ENCODE measurements at regions of chr17 and their contacts with region 1.

Region 1: DNA sequence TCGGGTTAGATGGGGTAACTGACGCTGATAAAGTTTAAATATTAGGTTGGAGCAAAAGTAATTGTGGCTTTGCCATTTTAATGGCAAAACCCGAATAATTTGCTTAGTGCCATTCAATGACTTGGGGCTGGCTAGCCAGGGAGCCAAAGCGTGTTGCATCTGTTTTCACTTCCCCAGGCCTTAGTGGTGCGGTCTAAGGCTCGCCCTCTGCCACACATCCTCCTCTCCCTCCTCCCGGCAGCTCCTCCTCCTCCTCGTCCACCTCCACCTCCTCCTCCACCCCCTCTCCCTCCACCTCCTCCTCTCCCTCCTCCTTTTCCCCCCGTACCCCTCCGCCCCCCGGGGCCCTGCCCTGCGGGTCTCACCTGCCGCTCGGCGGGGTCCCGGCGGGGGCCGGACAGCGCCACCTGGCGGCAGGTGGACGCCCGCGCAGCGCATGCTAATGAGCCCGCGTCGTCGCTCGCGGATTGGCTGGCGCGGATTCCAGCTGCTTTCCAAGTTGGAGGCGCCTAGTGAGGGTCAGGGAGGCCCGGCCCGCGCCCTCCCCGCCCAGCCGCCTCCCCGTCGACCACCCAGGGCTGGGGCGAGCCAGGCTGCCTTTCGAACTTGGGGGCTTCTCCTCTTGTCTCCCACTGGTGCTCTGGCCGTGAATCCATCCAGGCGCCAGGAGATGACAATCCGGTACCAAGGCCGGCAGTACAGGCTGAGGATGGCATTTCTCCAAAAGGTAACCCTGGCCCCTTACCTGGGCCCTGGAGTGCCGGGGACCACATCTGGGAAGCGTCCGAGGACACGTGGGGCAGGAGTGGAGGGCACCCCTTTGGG is 36.6 kb upstream of the RGS9 start:
- DNase-seq: peak; percentile 73
- H3K4me3 Mint-ChIP-seq: peak overlapping the region; percentile 66
- H3K27ac Mint-ChIP-seq: peak overlapping the region; percentile 68
- H3K4me1 Mint-ChIP-seq: peaks cover 29% of the 10 kb centered on the region
- H3K27me3 Mint-ChIP-seq: no peaks in the 10 kb centered on the region
- CTCF ChIP-seq: peak; percentile 95

Region 2: GRCh38 chr17:64968652-64969501 is 131.7 kb before region 1 on chr17:
- CTCF ChIA-PET with region 1: interaction called, 9 read pairs
- POLR2A ChIA-PET with region 1: interaction called, 34 read pairs
- intact Hi-C with region 1: loop called (anchors 1 kb)
- DNase-seq: no peak
- H3K4me3 Mint-ChIP-seq: no peak overlapping the region
- H3K27ac Mint-ChIP-seq: no peak overlapping the region
- H3K4me1 Mint-ChIP-seq: no peaks in the 10 kb centered on the region
- H3K27me3 Mint-ChIP-seq: no peaks in the 10 kb centered on the region
- CTCF ChIP-seq: no peak

Region 3: GRCh38 chr17:65027305-65027704 is 73.2 kb before region 1 on chr17:
- CTCF ChIA-PET with region 1: interaction called, 3 read pairs
- POLR2A ChIA-PET with region 1: interaction called, 9 read pairs
- intact Hi-C with region 1: loop called (anchors 2 kb)
- DNase-seq: peak; percentile 72
- H3K4me3 Mint-ChIP-seq: no peak overlapping the region
- H3K27ac Mint-ChIP-seq: peak overlapping the region; percentile 42
- H3K4me1 Mint-ChIP-seq: peaks cover 38% of the 10 kb centered on the region
- H3K27me3 Mint-ChIP-seq: no peaks in the 10 kb centered on the region
- CTCF ChIP-seq: peak; percentile 36

Region 4: DNA sequence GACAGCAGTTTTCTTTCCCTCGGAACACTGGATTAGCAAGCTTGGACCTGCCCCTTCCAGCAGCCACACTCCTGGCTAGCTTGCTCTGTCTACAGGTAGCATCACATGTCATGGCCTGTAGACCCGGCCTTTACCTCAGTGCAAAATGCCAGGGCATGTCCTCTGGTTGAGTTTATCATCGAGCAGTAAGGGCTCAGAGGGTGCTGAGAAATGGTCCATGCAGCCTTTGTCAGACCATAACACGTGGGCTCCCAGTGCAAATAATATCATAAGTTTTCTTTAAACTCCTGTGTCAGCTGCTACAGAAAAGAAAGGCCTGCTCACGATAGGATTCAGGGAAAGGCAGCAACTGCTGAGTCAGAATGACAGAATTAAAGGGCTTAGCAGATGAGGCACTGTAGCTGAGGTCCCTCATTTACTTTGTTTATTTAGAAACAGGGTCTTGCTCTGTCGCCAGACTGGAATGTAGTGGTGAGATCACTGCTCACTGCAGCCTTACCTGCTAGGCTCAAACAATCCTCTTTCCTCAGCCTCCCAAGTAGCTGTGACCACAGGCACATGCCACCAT is 36.0 kb before region 1 on chr17:
- CTCF ChIA-PET with region 1: interaction called, 33 read pairs
- POLR2A ChIA-PET with region 1: interaction called, 256 read pairs
- intact Hi-C with region 1: no loop called
- DNase-seq: peak; percentile 80
- H3K4me3 Mint-ChIP-seq: no peak overlapping the region
- H3K27ac Mint-ChIP-seq: peak overlapping the region; percentile 79
- H3K4me1 Mint-ChIP-seq: peaks cover 20% of the 10 kb centered on the region
- H3K27me3 Mint-ChIP-seq: no peaks in the 10 kb centered on the region
- CTCF ChIP-seq: no peak

Region 5: GRCh38 chr17:65088411-65089345 is 11.8 kb before region 1 on chr17:
- CTCF ChIA-PET with region 1: interaction called, 17 read pairs
- POLR2A ChIA-PET with region 1: interaction called, 18 read pairs
- intact Hi-C with region 1: no loop called
- DNase-seq: peak; percentile 30
- H3K4me3 Mint-ChIP-seq: no peak overlapping the region
- H3K27ac Mint-ChIP-seq: peak overlapping the region; percentile 32
- H3K4me1 Mint-ChIP-seq: peaks cover 20% of the 10 kb centered on the region
- H3K27me3 Mint-ChIP-seq: peaks cover 16% of the 10 kb centered on the region
- CTCF ChIP-seq: no peak

Region 6: GRCh38 chr17:65181237-65182061 is 80.9 kb after region 1 on chr17:
- CTCF ChIA-PET with region 1: no interaction called
- POLR2A ChIA-PET with region 1: no interaction called
- intact Hi-C with region 1: no loop called
- DNase-seq: no peak
- H3K4me3 Mint-ChIP-seq: no peak overlapping the region
- H3K27ac Mint-ChIP-seq: no peak overlapping the region
- H3K4me1 Mint-ChIP-seq: peaks cover 6% of the 10 kb centered on the region
- H3K27me3 Mint-ChIP-seq: peaks cover 15% of the 10 kb centered on the region
- CTCF ChIP-seq: no peak

Region 7: DNA sequence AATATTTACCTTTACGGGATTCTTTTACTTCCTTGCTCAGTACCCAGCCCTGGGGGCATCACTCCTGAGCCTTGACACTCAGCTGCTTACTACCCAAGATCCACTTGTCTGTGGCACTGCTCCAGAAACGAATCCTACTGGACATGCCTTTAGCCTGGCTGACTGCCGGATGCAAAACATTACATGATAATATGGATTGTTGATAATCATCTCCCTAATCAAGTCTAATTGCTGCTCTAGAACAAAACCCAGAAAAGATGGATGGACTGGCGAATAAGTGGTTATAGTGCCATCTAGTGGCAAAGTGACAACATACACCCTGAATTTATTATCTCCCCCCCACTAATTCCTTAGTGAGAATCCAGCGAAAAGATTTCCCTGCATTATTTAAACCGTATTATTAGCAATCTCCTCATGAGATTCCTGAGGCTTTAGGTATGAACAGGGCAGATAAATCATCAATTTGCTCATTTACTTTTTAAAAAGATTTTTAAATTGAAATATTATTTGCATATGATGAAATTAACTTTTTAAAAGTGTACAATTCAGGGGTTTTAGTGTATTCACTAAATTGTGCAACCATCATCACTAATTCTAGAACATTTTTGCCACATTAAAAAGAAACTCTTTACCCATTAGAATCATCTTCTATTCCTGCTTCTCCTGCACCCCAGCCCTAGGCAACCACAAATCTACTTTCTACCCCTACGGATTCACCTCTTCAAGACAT is 98.3 kb after region 1 on chr17:
- CTCF ChIA-PET with region 1: no interaction called
- POLR2A ChIA-PET with region 1: interaction called, 3 read pairs
- intact Hi-C with region 1: loop called (anchors 2 kb)
- DNase-seq: peak; percentile 63
- H3K4me3 Mint-ChIP-seq: no peak overlapping the region
- H3K27ac Mint-ChIP-seq: no peak overlapping the region
- H3K4me1 Mint-ChIP-seq: peaks cover 8% of the 10 kb centered on the region
- H3K27me3 Mint-ChIP-seq: no peaks in the 10 kb centered on the region
- CTCF ChIP-seq: peak; percentile 63

Measured in MCF 10A (cell line).